Endothelial cell of umbilical vein (primary cell): ENCODE measurements at regions of chrX and their contacts with region 1.

Region 1: GRCh38 chrX:16144420-16144819 is 21.1 kb downstream of the GRPR start:
- DNase-seq: no peak
- H3K4me3 ChIP-seq: no peak overlapping the region
- H3K27ac ChIP-seq: no peak overlapping the region
- H3K4me1 ChIP-seq: no peaks in the 10 kb centered on the region
- H3K27me3 ChIP-seq: no peaks in the 10 kb centered on the region
- CTCF ChIP-seq: no peak
- POLR2A ChIP-seq: no peak

Region 2: DNA sequence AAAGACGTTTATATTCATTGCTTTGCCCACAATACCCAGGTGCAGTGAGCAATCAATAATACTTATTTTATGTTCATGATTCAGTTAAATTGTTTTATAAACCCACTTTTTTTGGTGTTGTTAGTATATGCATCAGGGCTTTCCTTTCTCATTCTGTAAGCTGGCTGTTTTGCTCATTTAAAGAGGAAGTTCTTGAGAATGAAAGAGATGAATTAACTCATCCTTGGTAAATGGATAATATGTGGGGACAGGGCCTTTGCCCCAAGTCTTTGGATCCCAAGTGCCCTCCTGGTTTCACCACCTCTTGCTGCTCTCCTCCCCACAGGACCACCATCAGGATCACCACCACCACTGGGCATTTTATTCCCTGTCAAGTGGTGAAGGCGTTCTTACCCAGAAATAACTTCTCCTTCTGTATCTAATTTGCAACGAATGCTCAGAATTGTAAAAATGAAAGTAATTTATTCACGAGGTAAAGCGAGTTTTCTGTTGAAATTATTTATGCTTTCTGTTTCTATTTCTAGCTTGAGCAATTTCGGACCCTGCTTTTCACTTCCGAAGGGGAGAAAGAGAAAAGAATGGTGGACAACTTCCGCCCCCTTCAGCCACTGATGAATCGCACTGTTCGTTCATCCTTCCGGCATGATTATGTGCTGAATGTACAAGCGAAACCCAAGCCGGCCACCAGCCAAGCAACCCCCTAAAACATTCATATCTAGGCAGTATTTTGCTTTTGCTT is 362.3 kb before region 1 on chrX:
- CTCF ChIA-PET with region 1: no interaction called
- POLR2A ChIA-PET with region 1: no interaction called
- dilution Hi-C with region 1: no loop called
- intact Hi-C with region 1: no loop called
- DNase-seq: no peak
- H3K4me3 ChIP-seq: no peak overlapping the region
- H3K27ac ChIP-seq: no peak overlapping the region
- H3K4me1 ChIP-seq: no peaks in the 10 kb centered on the region
- H3K27me3 ChIP-seq: no peaks in the 10 kb centered on the region
- CTCF ChIP-seq: no peak
- POLR2A ChIP-seq: no peak

Region 3: DNA sequence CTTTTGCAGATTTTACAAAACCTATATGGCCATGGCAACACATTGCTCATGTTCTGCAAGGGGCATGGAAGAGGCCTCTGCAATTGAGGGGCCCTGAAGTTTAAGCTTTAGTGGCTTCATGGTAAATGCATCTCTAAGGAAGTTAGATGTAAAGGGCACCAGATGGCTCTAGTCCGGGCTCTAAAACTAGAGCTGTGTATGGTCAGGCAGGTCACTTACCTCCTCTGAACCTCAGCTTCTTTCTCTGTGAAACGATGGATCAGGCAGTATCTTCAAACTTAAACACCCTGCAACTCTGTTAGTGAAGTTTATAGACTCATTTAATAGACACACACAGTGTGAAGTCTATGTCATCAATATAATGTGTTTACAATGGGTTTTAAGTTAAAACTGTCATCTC is 32.8 kb after region 1 on chrX:
- CTCF ChIA-PET with region 1: no interaction called
- POLR2A ChIA-PET with region 1: no interaction called
- dilution Hi-C with region 1: no loop called
- intact Hi-C with region 1: loop called (anchors 5 kb)
- DNase-seq: no peak
- H3K4me3 ChIP-seq: no peak overlapping the region
- H3K27ac ChIP-seq: no peak overlapping the region
- H3K4me1 ChIP-seq: no peaks in the 10 kb centered on the region
- H3K27me3 ChIP-seq: peaks cover 0 to 2% of the 10 kb centered on the region in 2 experiments
- CTCF ChIP-seq: no peak
- POLR2A ChIP-seq: no peak